Activated CD8-positive, alpha-beta T cell treated with anti-CD3 and anti-CD28 coated beads for 36 hours (primary cell): ENCODE measurements at regions of chr22 and their contacts with region 1.

Region 1: GRCh38 chr22:40436505-40437451 is 66.4 kb downstream of the SGSM3 start:
- DNase-seq: peak; percentile 50
- ATAC-seq: peak; percentile 71
- H3K4me3 Mint-ChIP-seq: peak overlapping the region; percentile 17
- H3K27ac Mint-ChIP-seq: peak overlapping the region; percentile 83
- H3K4me1 Mint-ChIP-seq: peaks cover 61% of the 10 kb centered on the region
- H3K27me3 Mint-ChIP-seq: no peaks in the 10 kb centered on the region
- CTCF ChIP-seq: peak; percentile 78

Region 2: GRCh38 chr22:39789788-39790187 is 647.0 kb before region 1 on chr22:
- CTCF ChIA-PET with region 1: no interaction called
- POLR2A ChIA-PET with region 1: no interaction called
- intact Hi-C with region 1: no loop called
- DNase-seq: no peak
- ATAC-seq: no peak
- H3K4me3 Mint-ChIP-seq: no peak overlapping the region
- H3K27ac Mint-ChIP-seq: no peak overlapping the region
- H3K4me1 Mint-ChIP-seq: peaks cover 2% of the 10 kb centered on the region
- H3K27me3 Mint-ChIP-seq: no peaks in the 10 kb centered on the region
- CTCF ChIP-seq: no peak

Region 3: DNA sequence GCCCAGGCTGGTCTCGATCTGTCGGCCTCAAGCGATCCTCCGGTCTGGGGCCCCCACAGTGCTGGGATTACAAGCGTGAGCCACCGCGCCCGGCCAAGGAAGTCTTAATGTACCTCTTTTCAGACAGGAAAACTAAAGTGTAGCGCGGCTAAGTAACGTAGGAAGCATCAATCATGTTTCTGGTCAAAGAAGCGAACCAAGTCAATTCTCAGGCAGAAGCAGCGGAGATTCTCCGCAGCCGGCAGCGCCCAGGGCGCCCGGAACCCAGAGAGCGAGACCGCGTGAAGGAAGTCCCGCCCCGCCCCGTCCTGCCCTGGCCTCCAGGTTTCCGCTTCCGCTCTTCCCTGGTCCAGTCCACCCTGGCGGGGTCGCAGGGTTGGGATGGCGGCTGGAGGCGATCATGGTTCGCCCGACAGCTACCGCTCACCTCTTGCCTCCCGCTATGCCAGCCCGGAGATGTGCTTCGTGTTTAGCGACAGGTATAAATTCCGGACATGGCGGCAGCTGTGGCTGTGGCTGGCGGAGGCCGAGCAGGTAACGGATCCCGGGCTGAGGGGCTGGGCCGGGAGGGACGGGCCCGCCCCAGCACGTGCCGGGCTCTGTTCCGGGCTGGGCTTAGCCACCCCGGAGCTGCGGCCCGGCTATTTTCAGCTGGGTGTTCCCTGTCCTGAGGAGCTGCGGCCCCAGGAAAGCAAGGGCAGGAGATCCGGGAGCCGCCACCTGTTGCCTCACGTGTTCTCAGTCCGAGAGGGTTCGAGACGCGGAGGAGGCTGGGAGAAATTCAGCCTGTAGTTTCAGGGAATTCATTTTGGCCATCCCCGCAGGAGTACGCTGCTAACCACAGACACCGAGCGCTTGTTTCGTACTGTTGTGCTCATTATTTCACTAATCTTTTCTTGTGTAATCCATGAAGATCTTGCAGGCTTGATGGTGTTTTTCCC is 90.3 kb before region 1 on chr22 and contains the start of gene ADSL:
- CTCF ChIA-PET with region 1: no interaction called
- POLR2A ChIA-PET with region 1: no interaction called
- intact Hi-C with region 1: no loop called
- DNase-seq: peak; percentile 92
- ATAC-seq: peak; percentile 90
- H3K4me3 Mint-ChIP-seq: peak within 1 kb of the TSS; percentile 96
- H3K27ac Mint-ChIP-seq: peak within 1 kb of the TSS; percentile 96
- H3K4me1 Mint-ChIP-seq: peaks cover 41% of the 10 kb centered on the region
- H3K27me3 Mint-ChIP-seq: no peaks in the 10 kb centered on the region
- CTCF ChIP-seq: no peak
- total RNA-seq, gene ADSL: 160 to 169 TPM

Region 4: GRCh38 chr22:40418366-40419201 is 18.2 kb before region 1 on chr22:
- CTCF ChIA-PET with region 1: interaction called, 16 read pairs
- POLR2A ChIA-PET with region 1: no interaction called
- intact Hi-C with region 1: no loop called
- DNase-seq: peak; percentile 69
- ATAC-seq: peak; percentile 80
- H3K4me3 Mint-ChIP-seq: no peak overlapping the region
- H3K27ac Mint-ChIP-seq: no peak overlapping the region
- H3K4me1 Mint-ChIP-seq: peaks cover 34% of the 10 kb centered on the region
- H3K27me3 Mint-ChIP-seq: no peaks in the 10 kb centered on the region
- CTCF ChIP-seq: no peak

Region 5: DNA sequence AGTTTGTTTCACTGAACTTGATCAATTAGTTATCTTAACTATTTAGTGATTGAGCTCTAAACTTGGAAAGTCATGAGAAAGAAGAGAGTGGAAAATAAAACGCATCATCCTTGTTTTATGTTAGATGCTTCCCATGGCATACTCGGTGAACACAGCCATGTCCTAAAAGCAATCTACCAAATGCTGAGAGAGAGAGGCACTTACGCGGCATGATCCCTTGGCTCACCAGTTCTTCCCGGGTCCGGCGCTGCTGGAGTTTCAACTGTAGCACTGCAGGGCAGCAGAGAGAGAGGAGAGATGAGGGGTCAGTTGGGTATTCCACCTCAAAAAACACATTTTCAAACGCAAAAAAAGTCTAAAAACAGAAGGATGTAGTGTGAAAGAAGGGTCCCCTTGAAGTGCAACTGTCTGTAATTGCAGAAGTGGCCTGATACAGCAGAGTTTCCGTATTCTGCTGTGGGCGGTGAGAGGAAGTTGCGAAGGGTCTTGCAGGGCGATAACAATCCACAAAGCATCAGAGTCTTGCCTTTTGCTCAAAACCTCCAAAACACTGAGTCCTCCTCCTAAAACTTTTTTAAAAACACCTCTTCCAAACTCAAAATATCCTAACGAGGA is 26.3 kb after region 1 on chr22:
- CTCF ChIA-PET with region 1: interaction called, 33 read pairs
- POLR2A ChIA-PET with region 1: interaction called, 4 read pairs
- intact Hi-C with region 1: no loop called
- DNase-seq: peak; percentile 78
- ATAC-seq: peak; percentile 83
- H3K4me3 Mint-ChIP-seq: peak overlapping the region; percentile 95
- H3K27ac Mint-ChIP-seq: peak overlapping the region; percentile 100
- H3K4me1 Mint-ChIP-seq: peaks cover 53% of the 10 kb centered on the region
- H3K27me3 Mint-ChIP-seq: no peaks in the 10 kb centered on the region
- CTCF ChIP-seq: no peak

Region 6: DNA sequence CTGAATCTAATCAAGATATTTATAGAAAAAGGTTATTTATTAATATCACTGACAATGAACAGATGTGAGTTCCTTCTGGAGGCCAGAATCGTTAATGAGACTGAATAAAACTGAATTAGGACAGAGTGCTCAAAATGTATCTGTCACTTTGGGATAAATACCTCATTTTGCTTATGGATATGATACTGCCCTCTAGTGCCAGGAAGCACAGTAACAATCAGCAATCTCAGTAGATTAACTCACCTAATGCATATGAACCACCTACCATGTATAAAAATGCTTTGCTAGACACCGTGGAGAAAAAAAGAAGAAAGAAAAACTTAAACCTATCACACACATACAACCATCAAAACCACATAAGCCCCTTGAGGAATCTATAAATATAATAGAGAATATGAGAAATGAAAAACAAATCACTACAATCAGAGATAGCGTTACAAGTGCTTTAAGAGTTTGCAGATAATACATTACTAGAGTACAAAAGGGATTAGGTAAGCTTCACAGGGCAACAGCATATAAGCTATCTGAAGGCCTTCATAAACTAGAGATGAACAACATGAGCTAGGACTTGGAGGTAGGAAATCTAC is 51.0 kb after region 1 on chr22:
- CTCF ChIA-PET with region 1: interaction called, 139 read pairs
- POLR2A ChIA-PET with region 1: interaction called, 3 read pairs
- intact Hi-C with region 1: loop called (anchors 2 kb)
- DNase-seq: no peak
- ATAC-seq: peak; percentile 57
- H3K4me3 Mint-ChIP-seq: no peak overlapping the region
- H3K27ac Mint-ChIP-seq: peak overlapping the region; percentile 25
- H3K4me1 Mint-ChIP-seq: peaks cover 45% of the 10 kb centered on the region
- H3K27me3 Mint-ChIP-seq: no peaks in the 10 kb centered on the region
- CTCF ChIP-seq: peak; percentile 94

Region 7: GRCh38 chr22:40533712-40534378 is 97.1 kb after region 1 on chr22:
- CTCF ChIA-PET with region 1: interaction called, 13 read pairs
- POLR2A ChIA-PET with region 1: interaction called, 3 read pairs
- intact Hi-C with region 1: no loop called
- DNase-seq: peak; percentile 77
- ATAC-seq: peak; percentile 95
- H3K4me3 Mint-ChIP-seq: peak overlapping the region; percentile 74
- H3K27ac Mint-ChIP-seq: peak overlapping the region; percentile 83
- H3K4me1 Mint-ChIP-seq: peaks cover 61% of the 10 kb centered on the region
- H3K27me3 Mint-ChIP-seq: no peaks in the 10 kb centered on the region
- CTCF ChIP-seq: no peak

Region 8: DNA sequence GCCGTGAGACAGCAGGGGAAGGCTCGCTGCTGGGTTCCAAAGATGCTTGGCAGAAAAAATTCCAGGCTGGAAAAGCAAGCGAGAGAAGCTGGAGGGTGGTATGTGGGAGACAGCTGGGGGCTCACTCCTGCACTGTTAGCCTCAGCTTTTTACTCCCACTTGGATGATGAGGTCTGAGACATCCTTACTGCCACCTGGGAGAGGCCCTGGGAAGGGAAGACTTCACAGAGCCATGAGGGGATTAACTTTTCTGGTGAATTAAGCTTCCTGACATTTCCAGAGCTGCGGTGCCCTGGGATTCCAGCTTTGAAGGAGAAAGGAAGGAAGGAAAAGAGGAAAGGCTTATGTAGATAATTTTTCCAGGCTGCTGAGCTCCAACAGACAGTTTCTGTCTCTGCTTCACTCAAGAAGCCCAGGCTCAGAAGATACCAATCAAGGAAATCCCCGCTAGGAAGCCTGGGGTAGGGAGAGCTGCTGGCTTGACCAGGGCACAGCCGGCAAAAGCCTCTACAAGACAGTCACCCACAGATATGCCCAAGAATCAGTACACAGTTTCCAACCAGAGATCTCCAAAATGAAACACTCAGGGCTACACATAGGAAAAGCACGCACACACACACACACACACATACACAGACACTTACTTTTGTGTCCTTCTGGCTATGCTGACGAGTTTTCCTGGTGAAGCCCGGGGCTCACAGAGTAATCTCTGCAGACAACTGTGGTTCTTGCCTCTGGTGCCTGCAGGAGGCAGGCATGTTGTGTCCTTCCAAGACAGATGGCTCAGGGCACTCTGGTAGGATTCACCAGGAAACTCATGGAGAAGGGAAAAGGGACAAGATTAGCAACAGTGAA is 243.4 kb after region 1 on chr22:
- CTCF ChIA-PET with region 1: interaction called, 10 read pairs
- POLR2A ChIA-PET with region 1: no interaction called
- intact Hi-C with region 1: no loop called
- DNase-seq: no peak
- ATAC-seq: no peak
- H3K4me3 Mint-ChIP-seq: no peak overlapping the region
- H3K27ac Mint-ChIP-seq: no peak overlapping the region
- H3K4me1 Mint-ChIP-seq: peaks cover 30% of the 10 kb centered on the region
- H3K27me3 Mint-ChIP-seq: peaks cover 20% of the 10 kb centered on the region
- CTCF ChIP-seq: no peak